ENCODE measurements at regions of chr16 and their contacts with region 1.

Region 1: DNA sequence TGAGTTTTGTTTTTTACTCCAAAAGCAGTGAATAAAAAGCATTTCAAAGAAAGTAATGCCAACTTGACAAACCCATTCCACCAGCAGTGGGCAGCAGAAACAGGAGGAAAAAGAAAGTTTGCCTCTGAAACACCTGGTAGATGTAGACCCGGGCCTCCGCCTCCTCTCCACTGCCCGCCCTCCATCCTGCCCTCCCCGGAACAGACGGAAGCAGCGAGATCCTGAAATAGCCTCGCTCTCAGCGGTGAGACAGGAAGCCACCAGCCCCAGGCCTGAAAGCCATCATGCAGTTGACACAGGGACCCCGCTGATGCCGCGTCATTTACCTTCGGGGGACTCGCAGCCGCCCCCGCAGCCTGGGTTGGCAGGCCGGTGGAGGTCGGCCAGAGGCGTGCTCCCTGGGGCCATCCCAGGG is 67.8 kb downstream of the C16orf78 start:
- DNase-seq: peak; percentile 95
- H3K4me3 ChIP-seq: peak overlapping the region; percentile 55
- H3K27ac ChIP-seq: peak overlapping the region; percentile 81
- H3K4me1 ChIP-seq: peaks cover 69% of the 10 kb centered on the region
- CTCF ChIP-seq: peak; percentile 91

Region 2: DNA sequence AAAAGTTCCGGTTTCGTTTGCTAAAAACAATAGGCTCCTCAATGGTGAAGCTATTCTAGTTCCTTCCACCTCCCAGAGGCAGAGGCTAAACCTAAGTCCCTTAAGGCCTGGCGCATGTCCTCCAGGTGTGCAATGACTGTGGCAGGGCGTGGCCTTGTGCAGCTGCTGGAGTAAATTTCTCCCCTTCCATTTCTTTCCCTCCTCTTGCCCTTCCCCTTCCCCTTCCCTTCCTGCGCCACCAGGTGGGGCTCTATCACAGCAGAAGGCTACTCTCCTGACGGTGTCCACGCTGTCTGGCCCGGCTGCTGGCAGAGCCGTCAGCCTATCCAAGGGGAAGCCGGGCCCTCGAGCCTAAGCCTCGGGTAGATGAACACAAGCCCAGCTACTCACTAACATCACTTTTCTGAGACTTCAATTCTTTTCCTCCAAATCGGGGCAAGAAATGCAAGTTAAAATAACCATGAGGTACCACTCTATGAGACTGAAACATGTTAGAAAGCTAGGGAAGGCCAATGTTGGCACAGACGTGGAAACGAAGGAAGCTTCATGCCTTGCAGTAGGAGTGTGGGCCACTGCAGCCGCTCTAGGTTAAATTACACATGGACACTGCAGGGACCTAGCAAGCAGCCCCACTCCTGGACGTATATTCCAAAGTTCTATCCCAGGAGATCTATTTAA is 33.4 kb before region 1 on chr16:
- CTCF ChIA-PET with region 1: interaction called, 4 read pairs
- POLR2A ChIA-PET with region 1: interaction called, 4 read pairs
- intact Hi-C with region 1: loop called (anchors 1 kb)
- DNase-seq: peak; percentile 90
- H3K4me3 ChIP-seq: no peak overlapping the region
- H3K27ac ChIP-seq: no peak overlapping the region
- H3K4me1 ChIP-seq: peaks cover 26% of the 10 kb centered on the region
- CTCF ChIP-seq: peak; percentile 95

Region 3: DNA sequence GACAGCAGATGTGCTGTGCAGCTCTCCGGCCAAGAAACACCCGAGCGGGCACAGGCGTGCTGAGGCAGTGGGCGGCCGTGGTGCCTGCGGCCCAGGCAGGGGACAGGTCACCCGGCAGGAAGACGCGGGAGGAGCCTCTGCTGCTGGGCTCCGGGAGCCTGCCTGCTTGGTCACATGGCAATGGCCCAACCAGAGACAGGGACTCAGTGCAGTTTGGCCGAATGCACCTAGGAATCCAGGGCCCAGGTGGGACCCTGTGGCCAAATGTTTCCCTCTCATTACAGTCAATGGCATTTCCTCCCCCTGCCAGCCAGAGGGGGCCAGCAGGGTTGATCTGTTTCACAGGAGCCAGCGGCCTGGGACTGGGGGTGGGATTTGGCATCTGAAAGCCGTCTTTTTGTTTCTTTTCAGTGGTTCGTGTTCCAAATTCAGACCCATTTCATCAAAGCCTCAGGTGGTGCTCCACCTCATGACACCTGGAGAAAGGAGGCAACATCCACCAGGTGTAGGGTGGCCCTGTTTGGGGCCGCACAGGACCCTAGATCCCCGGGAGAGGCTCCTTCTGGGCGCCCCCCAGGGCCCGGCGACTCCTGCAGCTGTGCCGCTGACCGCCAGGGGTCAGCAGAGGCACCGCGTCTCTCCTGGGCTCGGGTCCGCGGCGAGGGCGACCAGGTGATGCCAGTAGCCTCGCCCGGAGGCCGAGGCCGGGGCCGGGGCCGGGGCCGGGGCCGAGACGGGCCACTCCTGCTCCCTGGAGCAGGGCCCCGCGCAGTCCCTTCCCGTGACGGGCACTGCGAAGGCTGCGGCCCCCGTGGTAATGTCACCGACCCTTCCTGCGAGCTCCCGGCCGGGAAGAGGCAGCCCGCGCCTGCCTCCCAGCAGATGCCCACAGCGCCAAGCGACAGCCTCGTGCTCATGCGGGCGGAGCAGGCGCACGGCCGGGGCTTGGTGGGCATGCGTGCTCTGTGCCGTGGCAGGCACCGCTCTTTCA is 50.7 kb after region 1 on chr16:
- CTCF ChIA-PET with region 1: interaction called, 3 read pairs
- POLR2A ChIA-PET with region 1: no interaction called
- intact Hi-C with region 1: loop called (anchors 1 kb)
- DNase-seq: peak; percentile 70
- H3K4me3 ChIP-seq: peak overlapping the region; percentile 26
- H3K27ac ChIP-seq: no peak overlapping the region
- H3K4me1 ChIP-seq: peaks cover 42% of the 10 kb centered on the region
- CTCF ChIP-seq: peak; percentile 91

Region 4: DNA sequence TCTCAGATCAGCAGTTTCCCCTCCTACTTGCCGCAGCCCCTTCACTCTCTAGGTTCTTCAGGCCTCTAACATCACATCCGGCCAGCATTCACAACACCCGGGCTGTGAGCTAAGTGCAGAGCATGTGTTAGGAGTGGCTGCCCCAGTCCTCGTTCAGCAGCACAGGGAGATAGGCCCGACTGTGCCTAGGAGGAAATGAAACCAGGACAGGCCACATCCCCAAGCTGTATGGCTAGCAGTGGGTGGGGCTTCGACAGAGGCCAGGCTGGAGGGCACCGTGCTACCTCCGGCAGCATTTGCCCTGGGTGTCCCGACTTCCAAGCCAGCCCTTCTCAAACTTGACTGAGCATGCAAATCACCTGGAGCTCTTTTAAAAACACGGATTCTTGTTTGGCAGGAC is 134.0 kb after region 1 on chr16:
- CTCF ChIA-PET with region 1: no interaction called
- POLR2A ChIA-PET with region 1: interaction called, 3 read pairs
- intact Hi-C with region 1: loop called (anchors 5 kb)
- DNase-seq: peak; percentile 84
- H3K4me3 ChIP-seq: no peak overlapping the region
- H3K27ac ChIP-seq: peak overlapping the region; percentile 8
- H3K4me1 ChIP-seq: peaks cover 21% of the 10 kb centered on the region
- CTCF ChIP-seq: no peak

Region 5: GRCh38 chr16:49701789-49702494 is 260.6 kb after region 1 on chr16:
- CTCF ChIA-PET with region 1: no interaction called
- POLR2A ChIA-PET with region 1: no interaction called
- intact Hi-C with region 1: loop called (anchors 10 kb)
- DNase-seq: no peak
- H3K4me3 ChIP-seq: no peak overlapping the region
- H3K27ac ChIP-seq: no peak overlapping the region
- H3K4me1 ChIP-seq: no peaks in the 10 kb centered on the region
- CTCF ChIP-seq: no peak

Measured in OCI-LY7 (cell line).